ENCODE measurements at regions of chr3 and their contacts with region 1.

Region 1: DNA sequence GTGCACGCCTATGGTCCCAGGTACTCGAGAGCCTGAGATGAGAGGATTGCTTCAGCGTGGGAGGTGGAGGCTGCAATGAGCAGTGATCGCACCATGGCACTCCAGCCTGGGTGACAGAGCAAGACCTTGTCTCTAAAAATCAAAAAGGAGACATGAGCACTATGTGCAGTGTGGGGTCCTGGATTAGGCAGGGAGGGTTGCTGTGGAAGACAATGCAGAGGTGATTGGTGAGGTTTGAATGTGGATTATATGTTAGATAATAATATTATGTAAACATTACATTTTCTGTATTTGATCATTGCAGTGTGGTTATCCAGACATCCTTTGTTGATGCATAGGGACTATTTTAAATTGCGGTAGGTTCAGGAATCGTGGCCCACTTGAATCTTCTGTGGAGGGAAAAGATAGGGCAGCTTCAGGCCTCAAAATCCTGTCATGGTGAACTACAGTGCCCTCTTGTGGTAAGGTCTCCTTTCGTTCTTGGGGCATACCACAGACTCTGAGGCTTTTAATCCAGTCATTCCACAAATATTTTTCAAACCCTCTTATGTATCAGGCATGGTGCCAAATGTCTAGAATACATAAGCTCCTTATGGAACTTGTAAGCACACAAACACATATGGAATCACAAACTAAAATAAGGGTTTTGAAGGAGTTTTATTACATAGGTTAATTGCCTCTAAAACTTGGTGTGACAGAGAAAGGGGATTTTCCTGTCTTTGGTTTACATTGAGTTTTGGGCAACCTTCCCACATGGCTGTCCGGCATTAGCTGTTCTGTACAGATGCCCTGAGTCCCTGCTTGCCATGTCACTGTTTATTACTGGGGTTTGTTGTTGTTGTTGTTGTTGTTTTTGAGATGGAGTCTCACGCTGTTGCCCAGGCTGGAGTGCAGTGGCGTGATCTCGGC is 37.7 kb downstream of the GPD1L start:
- DNase-seq: peak; percentile 46 to 58 (median 56)
- H3K4me3 ChIP-seq: no peak overlapping the region
- H3K4me3 Mint-ChIP-seq: no peak overlapping the region
- H3K27ac ChIP-seq: no peak overlapping the region
- H3K27ac Mint-ChIP-seq: peak overlapping the region in 1 of 7 donors; percentile 3
- H3K4me1 ChIP-seq: no peaks in the 10 kb centered on the region
- H3K4me1 Mint-ChIP-seq: peaks cover 1 to 11% (median 4%) of the 10 kb centered on the region in 4 donors
- H3K27me3 ChIP-seq: no peaks in the 10 kb centered on the region
- H3K27me3 Mint-ChIP-seq: no peaks in the 10 kb centered on the region

Region 2: GRCh38 chr3:31610700-31611275 is 533.3 kb before region 1 on chr3:
- CTCF ChIA-PET with region 1: no interaction called
- POLR2A ChIA-PET with region 1: no interaction called
- intact Hi-C with region 1: loop called (anchors 5 kb)
- DNase-seq: no peak
- H3K4me3 ChIP-seq: no peak overlapping the region
- H3K4me3 Mint-ChIP-seq: peak overlapping the region in 2 of 8 donors; percentile 37 to 47
- H3K27ac ChIP-seq: no peak overlapping the region
- H3K27ac Mint-ChIP-seq: peak overlapping the region in 4 of 7 donors; percentile 31 to 61 (median 46)
- H3K4me1 ChIP-seq: peaks cover 38% of the 10 kb centered on the region
- H3K4me1 Mint-ChIP-seq: peaks cover 51 to 81% (median 67%) of the 10 kb centered on the region in 4 donors
- H3K27me3 ChIP-seq: no peaks in the 10 kb centered on the region
- H3K27me3 Mint-ChIP-seq: no peaks in the 10 kb centered on the region

Region 3: GRCh38 chr3:32026593-32026992 is 117.5 kb before region 1 on chr3:
- CTCF ChIA-PET with region 1: interaction called, 34 read pairs
- POLR2A ChIA-PET with region 1: no interaction called
- intact Hi-C with region 1: no loop called
- DNase-seq: no peak
- H3K4me3 ChIP-seq: no peak overlapping the region
- H3K4me3 Mint-ChIP-seq: no peak overlapping the region
- H3K27ac ChIP-seq: no peak overlapping the region
- H3K27ac Mint-ChIP-seq: no peak overlapping the region
- H3K4me1 ChIP-seq: no peaks in the 10 kb centered on the region
- H3K4me1 Mint-ChIP-seq: no peaks in the 10 kb centered on the region
- H3K27me3 ChIP-seq: peaks cover 7% of the 10 kb centered on the region
- H3K27me3 Mint-ChIP-seq: peaks cover 0 to 3% of the 10 kb centered on the region in 2 donors

Region 4: DNA sequence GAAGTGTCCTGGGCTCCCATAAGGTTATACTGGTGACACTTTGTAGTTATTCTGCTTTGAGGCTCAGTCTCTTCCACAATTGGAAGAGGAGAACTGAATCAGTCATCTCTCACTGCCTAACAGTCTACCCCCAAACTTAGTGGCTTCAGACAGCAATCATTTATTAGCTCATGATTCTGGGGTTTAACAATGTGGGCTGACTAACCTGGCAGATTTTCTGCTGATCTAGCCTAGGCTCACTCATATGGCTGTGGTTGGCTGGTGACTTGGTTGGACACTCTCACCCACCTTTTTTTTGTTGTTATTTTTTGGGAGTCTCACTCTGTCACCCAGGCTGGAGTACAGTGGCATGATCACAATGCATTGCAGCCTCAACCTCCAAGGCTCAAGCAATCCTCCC is 30.5 kb before region 1 on chr3:
- CTCF ChIA-PET with region 1: interaction called, 7 read pairs
- POLR2A ChIA-PET with region 1: interaction called, 3 read pairs
- intact Hi-C with region 1: loop called (anchors 2 kb)
- DNase-seq: no peak
- H3K4me3 ChIP-seq: peak overlapping the region in 1 of 2 donors; percentile 32
- H3K4me3 Mint-ChIP-seq: peak overlapping the region in 6 of 8 donors; percentile 84 to 92 (median 87)
- H3K27ac ChIP-seq: peak overlapping the region; percentile 57
- H3K27ac Mint-ChIP-seq: peak overlapping the region; percentile 94 to 99 (median 95)
- H3K4me1 ChIP-seq: peaks cover 66% of the 10 kb centered on the region
- H3K4me1 Mint-ChIP-seq: peaks cover 50 to 89% (median 68%) of the 10 kb centered on the region in 4 donors
- H3K27me3 ChIP-seq: no peaks in the 10 kb centered on the region
- H3K27me3 Mint-ChIP-seq: no peaks in the 10 kb centered on the region

Measured in CD4-positive, alpha-beta memory T cell (primary cell).